Activated CD8-positive, alpha-beta memory T cell treated with anti-CD3 and anti-CD28 coated beads, Interleukin-2, amount 10 ng/mL, durations not matched to agents 7 days and 5 days (primary cell): ENCODE measurements at regions of chr6 and their contacts with region 1.

Region 1: DNA sequence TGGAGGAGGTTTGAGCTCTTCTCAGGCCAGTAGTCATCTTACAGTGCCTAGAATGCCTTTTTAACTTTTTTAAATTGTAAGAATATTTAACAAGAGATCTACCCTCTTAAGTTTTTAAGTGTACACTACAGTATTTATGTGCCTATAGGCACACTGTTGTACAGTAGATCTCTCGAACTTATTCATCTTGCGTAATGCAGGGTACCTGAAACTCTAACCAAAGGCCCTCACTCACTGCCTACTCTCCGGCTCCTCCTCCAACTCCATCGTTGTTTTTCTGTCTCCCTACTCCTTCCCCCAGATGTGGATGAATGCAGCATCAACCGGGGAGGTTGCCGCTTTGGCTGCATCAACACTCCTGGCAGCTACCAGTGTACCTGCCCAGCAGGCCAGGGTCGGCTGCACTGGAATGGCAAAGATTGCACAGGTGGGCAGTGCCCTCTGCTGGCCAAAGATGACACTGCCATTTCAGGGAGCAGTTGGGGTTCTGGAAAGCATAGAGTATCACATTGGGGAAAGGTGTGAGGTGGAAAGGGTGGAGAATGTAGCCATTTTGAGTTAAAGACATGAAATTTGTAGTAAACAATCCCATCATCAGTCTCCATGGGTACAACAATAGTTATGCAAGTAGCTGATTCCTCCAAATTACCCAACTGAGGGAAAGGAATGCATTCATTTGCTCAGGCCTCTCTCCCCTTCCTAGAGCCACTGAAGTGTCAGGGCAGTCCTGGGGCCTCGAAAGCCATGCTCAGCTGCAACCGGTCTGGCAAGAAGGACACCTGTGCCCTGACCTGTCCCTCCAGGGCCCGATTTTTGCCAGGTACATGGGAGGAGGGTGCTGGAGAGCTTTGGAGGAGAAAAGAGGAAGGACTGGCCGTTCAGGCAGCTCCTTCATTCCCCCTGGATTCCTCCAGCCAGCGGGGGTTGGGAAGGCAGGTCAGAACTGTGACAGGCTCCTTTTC is 18.4 kb upstream of the ZNF76 start:
- DNase-seq: peak; percentile 83
- ATAC-seq: peak; percentile 85
- H3K4me3 Mint-ChIP-seq: no peak overlapping the region
- H3K27ac Mint-ChIP-seq: no peak overlapping the region
- H3K4me1 Mint-ChIP-seq: peaks cover 10% of the 10 kb centered on the region
- H3K27me3 Mint-ChIP-seq: no peaks in the 10 kb centered on the region

Region 2: GRCh38 chr6:35139908-35140655 is 101.0 kb before region 1 on chr6:
- CTCF ChIA-PET with region 1: interaction called, 18 read pairs
- DNase-seq: peak; percentile 67
- ATAC-seq: peak; percentile 32
- H3K4me3 Mint-ChIP-seq: peak overlapping the region; percentile 14
- H3K27ac Mint-ChIP-seq: no peak overlapping the region
- H3K4me1 Mint-ChIP-seq: peaks cover 20% of the 10 kb centered on the region
- H3K27me3 Mint-ChIP-seq: peaks cover 37% of the 10 kb centered on the region

Region 3: GRCh38 chr6:35202066-35202546 is 39.0 kb before region 1 on chr6:
- CTCF ChIA-PET with region 1: interaction called, 63 read pairs
- DNase-seq: no peak
- ATAC-seq: no peak
- H3K4me3 Mint-ChIP-seq: no peak overlapping the region
- H3K27ac Mint-ChIP-seq: no peak overlapping the region
- H3K4me1 Mint-ChIP-seq: no peaks in the 10 kb centered on the region
- H3K27me3 Mint-ChIP-seq: peaks cover 56% of the 10 kb centered on the region

Region 4: DNA sequence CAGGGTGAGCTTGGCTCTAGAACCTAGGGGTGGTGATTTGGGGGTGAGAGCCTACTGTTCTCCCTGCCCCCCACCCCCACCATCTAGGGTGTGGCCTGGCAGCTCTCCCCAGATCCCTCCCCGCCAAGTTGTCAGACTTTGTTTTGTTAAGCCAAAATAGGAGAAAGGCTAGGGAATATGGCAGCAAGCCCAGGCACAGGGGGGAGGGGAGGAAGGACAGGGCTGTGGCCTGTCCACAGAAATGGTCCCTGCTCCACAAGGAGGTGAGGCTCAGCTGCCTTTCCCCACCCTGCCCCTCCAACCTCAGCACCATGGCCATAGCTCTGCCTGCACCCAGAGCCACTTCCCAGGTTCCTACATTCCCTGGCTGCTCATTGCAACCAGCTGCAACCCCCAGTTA is 10.2 kb before region 1 on chr6:
- CTCF ChIA-PET with region 1: interaction called, 41 read pairs
- DNase-seq: no peak
- ATAC-seq: no peak
- H3K4me3 Mint-ChIP-seq: no peak overlapping the region
- H3K27ac Mint-ChIP-seq: no peak overlapping the region
- H3K4me1 Mint-ChIP-seq: no peaks in the 10 kb centered on the region
- H3K27me3 Mint-ChIP-seq: no peaks in the 10 kb centered on the region

Region 5: GRCh38 chr6:35311390-35312075 is 70.4 kb after region 1 on chr6:
- CTCF ChIA-PET with region 1: no interaction called
- DNase-seq: peak; percentile 82
- ATAC-seq: peak; percentile 88
- H3K4me3 Mint-ChIP-seq: peak overlapping the region; percentile 62
- H3K27ac Mint-ChIP-seq: peak overlapping the region; percentile 97
- H3K4me1 Mint-ChIP-seq: peaks cover 75% of the 10 kb centered on the region
- H3K27me3 Mint-ChIP-seq: no peaks in the 10 kb centered on the region